T-cell (primary cell): ENCODE measurements at regions of chr16 and their contacts with region 1.

Region 1: DNA sequence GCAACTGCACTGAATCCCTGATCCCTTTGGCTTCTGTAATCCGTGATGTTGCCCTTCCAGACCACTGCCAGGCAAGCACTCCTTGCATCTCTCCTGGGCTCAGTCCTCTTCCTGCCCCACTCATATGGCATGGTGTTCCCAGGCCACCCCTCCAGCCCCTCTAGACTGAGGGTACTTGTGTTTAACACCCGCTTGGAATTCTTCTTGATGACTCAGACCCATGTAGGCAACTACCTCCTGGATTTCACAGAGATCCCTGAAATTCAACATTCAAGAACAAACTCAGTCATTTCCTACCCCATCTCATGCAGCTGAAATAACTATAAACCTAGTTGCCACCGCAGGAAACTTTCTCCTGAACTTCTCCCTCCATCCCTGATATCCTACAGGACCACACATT is 541.9 kb upstream of the CDH11 start:
- DNase-seq: no peak
- ATAC-seq: no peak
- H3K4me3 ChIP-seq: no peak overlapping the region
- H3K4me3 Mint-ChIP-seq: no peak overlapping the region
- H3K27ac ChIP-seq: no peak overlapping the region
- H3K27ac Mint-ChIP-seq: no peak overlapping the region
- H3K4me1 ChIP-seq: no peaks in the 10 kb centered on the region
- H3K4me1 Mint-ChIP-seq: no peaks in the 10 kb centered on the region
- H3K27me3 ChIP-seq: peaks cover 0 to 4% of the 10 kb centered on the region in 2 experiments
- H3K27me3 Mint-ChIP-seq: peaks cover 0 to 2% of the 10 kb centered on the region in 2 donors

Region 2: DNA sequence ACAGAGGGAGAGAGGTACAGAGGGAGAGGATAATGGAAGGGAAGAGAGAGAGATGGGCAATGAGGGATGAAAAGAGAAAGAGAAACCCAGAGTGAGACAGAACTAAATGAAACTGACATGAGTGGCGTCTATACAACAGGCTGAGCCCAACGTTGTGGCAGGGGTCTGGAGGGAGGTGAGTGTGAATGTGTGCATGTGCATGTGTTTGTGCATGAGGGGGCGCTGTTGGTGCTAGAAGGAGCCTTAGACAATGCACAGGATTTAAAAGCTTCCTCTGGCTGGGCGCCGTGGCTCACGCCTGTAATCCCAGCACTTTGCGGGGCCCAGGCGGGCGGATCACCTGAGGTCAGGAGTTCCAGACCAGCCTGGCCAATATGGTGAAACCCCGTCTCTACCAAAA is 87.1 kb before region 1 on chr16:
- CTCF ChIA-PET with region 1: no interaction called
- POLR2A ChIA-PET with region 1: no interaction called
- DNase-seq: no peak
- ATAC-seq: no peak
- H3K4me3 ChIP-seq: no peak overlapping the region
- H3K4me3 Mint-ChIP-seq: no peak overlapping the region
- H3K27ac ChIP-seq: no peak overlapping the region
- H3K27ac Mint-ChIP-seq: no peak overlapping the region
- H3K4me1 ChIP-seq: no peaks in the 10 kb centered on the region
- H3K4me1 Mint-ChIP-seq: no peaks in the 10 kb centered on the region
- H3K27me3 ChIP-seq: no peaks in the 10 kb centered on the region
- H3K27me3 Mint-ChIP-seq: no peaks in the 10 kb centered on the region

Region 3: DNA sequence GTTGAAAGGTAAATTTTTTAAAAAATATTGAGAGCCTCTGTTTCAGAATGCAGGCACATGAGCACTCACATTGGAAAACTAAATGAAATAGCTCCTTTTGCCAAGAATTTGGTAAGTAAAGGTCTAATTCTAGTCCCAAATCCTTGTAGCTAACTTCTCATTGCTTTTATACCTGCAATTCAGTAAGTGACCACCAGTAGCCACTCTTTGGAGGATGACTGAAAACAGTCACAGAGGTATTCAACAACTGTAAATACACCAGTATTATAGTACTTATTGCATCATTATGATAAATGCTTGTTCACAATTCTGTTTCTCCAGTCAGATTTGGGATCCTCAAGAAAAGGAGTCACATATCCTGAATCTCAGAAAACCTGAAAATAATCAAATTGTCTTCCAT is 20.5 kb after region 1 on chr16:
- CTCF ChIA-PET with region 1: interaction called in 1 of 2 experiments, 10 read pairs
- POLR2A ChIA-PET with region 1: no interaction called
- DNase-seq: no peak
- ATAC-seq: no peak
- H3K4me3 ChIP-seq: no peak overlapping the region
- H3K4me3 Mint-ChIP-seq: no peak overlapping the region
- H3K27ac ChIP-seq: no peak overlapping the region
- H3K27ac Mint-ChIP-seq: no peak overlapping the region
- H3K4me1 ChIP-seq: no peaks in the 10 kb centered on the region
- H3K4me1 Mint-ChIP-seq: no peaks in the 10 kb centered on the region
- H3K27me3 ChIP-seq: no peaks in the 10 kb centered on the region
- H3K27me3 Mint-ChIP-seq: no peaks in the 10 kb centered on the region

Region 4: GRCh38 chr16:66045626-66046025 is 381.9 kb after region 1 on chr16:
- CTCF ChIA-PET with region 1: no interaction called
- POLR2A ChIA-PET with region 1: no interaction called
- DNase-seq: no peak
- ATAC-seq: no peak
- H3K4me3 ChIP-seq: no peak overlapping the region
- H3K4me3 Mint-ChIP-seq: no peak overlapping the region
- H3K27ac ChIP-seq: no peak overlapping the region
- H3K27ac Mint-ChIP-seq: no peak overlapping the region
- H3K4me1 ChIP-seq: no peaks in the 10 kb centered on the region
- H3K4me1 Mint-ChIP-seq: no peaks in the 10 kb centered on the region
- H3K27me3 ChIP-seq: no peaks in the 10 kb centered on the region
- H3K27me3 Mint-ChIP-seq: peaks cover 3 to 11% of the 10 kb centered on the region in 2 donors